CD8-positive, alpha-beta T cell (primary cell): ENCODE measurements at regions of chr17 and their contacts with region 1.

Region 1: DNA sequence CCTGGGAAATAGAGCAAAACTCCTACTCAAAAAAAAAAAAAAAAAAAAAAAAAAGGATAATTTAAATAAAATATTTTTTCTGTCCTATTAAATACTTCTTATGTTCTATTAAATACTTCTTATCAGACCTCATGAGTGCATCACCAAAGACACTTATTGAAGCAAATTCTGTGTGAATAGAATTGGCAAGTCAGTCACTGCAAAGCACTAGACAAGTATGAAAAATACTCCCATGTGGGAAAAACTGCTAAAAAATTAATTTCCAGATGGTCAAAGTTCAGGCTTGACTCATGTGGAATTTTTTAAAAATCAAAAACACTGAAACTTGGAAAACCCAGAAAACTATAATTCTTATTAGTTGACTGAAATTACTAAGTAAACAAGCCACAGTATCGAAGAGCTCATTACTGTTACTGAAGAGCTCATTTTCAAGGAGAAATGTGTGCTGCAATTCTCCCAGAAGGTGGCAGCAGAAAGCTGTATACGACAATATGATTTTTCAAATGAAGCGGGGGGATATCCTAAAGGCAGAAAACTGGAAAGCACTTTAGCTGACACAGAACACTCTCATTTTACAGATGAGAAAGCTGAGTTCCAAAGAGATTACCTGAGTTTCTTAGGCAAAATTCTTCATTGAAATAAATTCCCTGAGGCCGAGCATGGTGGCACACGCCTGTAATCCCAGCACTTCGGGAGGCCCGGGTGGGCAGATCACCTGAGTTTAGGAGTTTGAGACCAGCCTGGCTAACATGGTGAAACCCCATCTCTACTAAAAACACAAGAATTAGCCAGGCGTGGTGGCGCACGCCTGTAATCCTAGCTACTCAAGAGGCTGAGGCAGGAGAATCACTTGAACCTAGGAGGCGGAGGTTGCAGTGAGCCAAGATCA is 15.9 kb upstream of the FBXO47 start:
- DNase-seq: peak in 8 of 9 experiments; percentile 16 to 82 (median 55)
- ATAC-seq: peak; percentile 84
- H3K4me3 ChIP-seq: no peak overlapping the region
- H3K4me3 Mint-ChIP-seq: no peak overlapping the region
- H3K27ac ChIP-seq: no peak overlapping the region
- H3K27ac Mint-ChIP-seq: no peak overlapping the region
- H3K4me1 ChIP-seq: no peaks in the 10 kb centered on the region
- H3K4me1 Mint-ChIP-seq: peaks cover 2% of the 10 kb centered on the region
- H3K27me3 ChIP-seq: no peaks in the 10 kb centered on the region
- H3K27me3 Mint-ChIP-seq: no peaks in the 10 kb centered on the region
- CTCF ChIP-seq: peak; percentile 72

Region 2: GRCh38 chr17:38939987-38940386 is 43.1 kb before region 1 on chr17:
- CTCF ChIA-PET with region 1: no interaction called
- POLR2A ChIA-PET with region 1: no interaction called
- intact Hi-C with region 1: loop called in 1 of 2 experiments (anchors 5 kb)
- DNase-seq: no peak
- ATAC-seq: no peak
- H3K4me3 ChIP-seq: no peak overlapping the region
- H3K4me3 Mint-ChIP-seq: no peak overlapping the region
- H3K27ac ChIP-seq: no peak overlapping the region
- H3K27ac Mint-ChIP-seq: no peak overlapping the region
- H3K4me1 ChIP-seq: no peaks in the 10 kb centered on the region
- H3K4me1 Mint-ChIP-seq: peaks cover 1% of the 10 kb centered on the region
- H3K27me3 ChIP-seq: no peaks in the 10 kb centered on the region
- H3K27me3 Mint-ChIP-seq: no peaks in the 10 kb centered on the region
- CTCF ChIP-seq: no peak

Region 3: GRCh38 chr17:39028690-39029089 is 45.6 kb after region 1 on chr17:
- CTCF ChIA-PET with region 1: interaction called, 13 read pairs
- POLR2A ChIA-PET with region 1: interaction called, 3 read pairs
- intact Hi-C with region 1: no loop called
- DNase-seq: no peak
- ATAC-seq: no peak
- H3K4me3 ChIP-seq: no peak overlapping the region
- H3K4me3 Mint-ChIP-seq: no peak overlapping the region
- H3K27ac ChIP-seq: no peak overlapping the region
- H3K27ac Mint-ChIP-seq: no peak overlapping the region
- H3K4me1 ChIP-seq: peaks cover 8% of the 10 kb centered on the region
- H3K4me1 Mint-ChIP-seq: peaks cover 11% of the 10 kb centered on the region
- H3K27me3 ChIP-seq: peaks cover 0 to 8% of the 10 kb centered on the region in 2 experiments
- H3K27me3 Mint-ChIP-seq: peaks cover 19% of the 10 kb centered on the region
- CTCF ChIP-seq: no peak

Region 4: GRCh38 chr17:39069114-39069756 is 86.1 kb after region 1 on chr17:
- CTCF ChIA-PET with region 1: interaction called, 28 read pairs
- POLR2A ChIA-PET with region 1: no interaction called
- intact Hi-C with region 1: loop called in 1 of 2 experiments (anchors 2 kb)
- DNase-seq: peak in 7 of 9 experiments; percentile 2 to 76 (median 32)
- ATAC-seq: peak; percentile 96
- H3K4me3 ChIP-seq: no peak overlapping the region
- H3K4me3 Mint-ChIP-seq: no peak overlapping the region
- H3K27ac ChIP-seq: no peak overlapping the region
- H3K27ac Mint-ChIP-seq: peak overlapping the region; percentile 57
- H3K4me1 ChIP-seq: no peaks in the 10 kb centered on the region
- H3K4me1 Mint-ChIP-seq: peaks cover 5% of the 10 kb centered on the region
- H3K27me3 ChIP-seq: no peaks in the 10 kb centered on the region
- H3K27me3 Mint-ChIP-seq: no peaks in the 10 kb centered on the region
- CTCF ChIP-seq: peak; percentile 65

Region 5: DNA sequence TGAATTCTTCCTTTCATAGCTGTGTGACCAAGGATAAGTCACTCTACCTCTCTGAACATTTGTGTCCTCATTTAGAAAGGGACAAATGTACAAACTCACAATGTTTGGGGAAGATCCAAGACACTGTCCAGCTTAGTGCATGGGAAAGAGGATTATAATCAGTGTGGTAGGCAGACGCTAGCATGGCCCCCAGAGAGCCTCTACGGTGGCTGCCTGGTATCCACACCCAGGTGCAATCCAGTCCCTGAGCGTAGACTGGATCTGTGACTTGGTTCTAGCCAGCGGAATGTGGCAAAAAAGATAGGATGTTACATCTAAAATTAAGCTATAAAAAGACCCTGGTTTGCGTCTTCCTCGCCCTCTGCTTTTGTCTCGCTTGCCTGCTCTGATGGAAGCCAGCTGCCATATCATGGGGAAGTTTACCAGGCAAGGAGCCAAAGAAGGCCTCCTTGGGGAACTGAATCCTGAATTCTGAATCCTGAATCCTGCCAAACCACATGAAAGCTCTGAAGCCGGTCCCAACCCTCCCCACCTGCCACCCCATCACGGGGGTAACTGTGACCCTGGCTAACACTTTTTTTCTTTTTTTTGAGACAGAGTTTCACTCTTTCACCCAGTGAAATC is 116.7 kb after region 1 on chr17:
- CTCF ChIA-PET with region 1: interaction called, 11 read pairs
- POLR2A ChIA-PET with region 1: no interaction called
- intact Hi-C with region 1: no loop called
- DNase-seq: no peak
- ATAC-seq: no peak
- H3K4me3 ChIP-seq: no peak overlapping the region
- H3K4me3 Mint-ChIP-seq: no peak overlapping the region
- H3K27ac ChIP-seq: no peak overlapping the region
- H3K27ac Mint-ChIP-seq: no peak overlapping the region
- H3K4me1 ChIP-seq: peaks cover 65% of the 10 kb centered on the region
- H3K4me1 Mint-ChIP-seq: peaks cover 71% of the 10 kb centered on the region
- H3K27me3 ChIP-seq: no peaks in the 10 kb centered on the region
- H3K27me3 Mint-ChIP-seq: no peaks in the 10 kb centered on the region
- CTCF ChIP-seq: no peak

Region 6: GRCh38 chr17:39164675-39165143 is 181.6 kb after region 1 on chr17:
- CTCF ChIA-PET with region 1: interaction called, 83 read pairs
- POLR2A ChIA-PET with region 1: interaction called, 5 read pairs
- intact Hi-C with region 1: no loop called
- DNase-seq: peak; percentile 53 to 90 (median 74)
- ATAC-seq: peak; percentile 89
- H3K4me3 ChIP-seq: peak overlapping the region; percentile 68 to 95
- H3K4me3 Mint-ChIP-seq: peak overlapping the region; percentile 91
- H3K27ac ChIP-seq: peak overlapping the region in 1 of 2 experiments; percentile 21
- H3K27ac Mint-ChIP-seq: peak overlapping the region; percentile 67
- H3K4me1 ChIP-seq: peaks cover 20% of the 10 kb centered on the region
- H3K4me1 Mint-ChIP-seq: peaks cover 33% of the 10 kb centered on the region
- H3K27me3 ChIP-seq: peaks cover 0 to 3% of the 10 kb centered on the region in 2 experiments
- H3K27me3 Mint-ChIP-seq: peaks cover 11% of the 10 kb centered on the region
- CTCF ChIP-seq: peak; percentile 80

Region 7: GRCh38 chr17:39235555-39236449 is 252.7 kb after region 1 on chr17:
- CTCF ChIA-PET with region 1: interaction called, 17 read pairs
- POLR2A ChIA-PET with region 1: no interaction called
- intact Hi-C with region 1: loop called (anchors 1 to 2 kb)
- DNase-seq: peak in 6 of 9 experiments; percentile 32 to 80 (median 60)
- ATAC-seq: peak; percentile 42
- H3K4me3 ChIP-seq: no peak overlapping the region
- H3K4me3 Mint-ChIP-seq: no peak overlapping the region
- H3K27ac ChIP-seq: peak overlapping the region in 1 of 2 experiments; percentile 48
- H3K27ac Mint-ChIP-seq: peak overlapping the region; percentile 79
- H3K4me1 ChIP-seq: peaks cover 55% of the 10 kb centered on the region
- H3K4me1 Mint-ChIP-seq: peaks cover 38% of the 10 kb centered on the region
- H3K27me3 ChIP-seq: no peaks in the 10 kb centered on the region
- H3K27me3 Mint-ChIP-seq: peaks cover 8% of the 10 kb centered on the region
- CTCF ChIP-seq: peak; percentile 59